ENCODE measurements at regions of chr2 and their contacts with region 1.

Region 1: DNA sequence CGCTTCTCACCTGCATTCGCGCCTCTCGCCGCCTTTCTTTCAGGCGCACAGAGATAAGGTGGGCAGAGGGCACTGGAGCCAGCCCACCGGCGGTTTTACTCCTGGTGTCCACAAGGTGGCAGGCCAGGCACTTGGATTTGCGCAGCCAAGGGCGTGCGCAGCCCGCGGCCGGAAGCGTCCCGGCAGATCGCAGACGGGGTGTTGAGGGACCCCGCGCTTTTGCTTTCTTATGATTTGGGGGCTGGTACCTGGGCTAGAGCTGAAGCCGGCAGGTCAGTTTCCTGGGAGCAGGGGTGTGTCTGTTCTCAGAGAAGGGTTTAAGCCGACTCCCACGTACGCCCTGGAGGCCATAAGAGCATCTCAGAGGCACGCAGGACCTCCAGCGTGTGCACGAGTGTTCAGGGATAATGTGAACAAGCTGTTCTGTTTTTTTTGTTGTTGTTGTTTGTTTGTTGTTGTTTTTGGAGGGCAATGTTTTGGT is 305.6 kb upstream of the CXCR4 start:
- DNase-seq: peak; percentile 45
- H3K4me3 ChIP-seq: peak overlapping the region; percentile 34 to 46 (median 41)
- H3K27ac ChIP-seq: no peak overlapping the region
- H3K4me1 ChIP-seq: no peaks in the 10 kb centered on the region
- H3K27me3 ChIP-seq: peaks cover 3% of the 10 kb centered on the region
- CTCF ChIP-seq: peak; percentile 74 to 87

Region 2: DNA sequence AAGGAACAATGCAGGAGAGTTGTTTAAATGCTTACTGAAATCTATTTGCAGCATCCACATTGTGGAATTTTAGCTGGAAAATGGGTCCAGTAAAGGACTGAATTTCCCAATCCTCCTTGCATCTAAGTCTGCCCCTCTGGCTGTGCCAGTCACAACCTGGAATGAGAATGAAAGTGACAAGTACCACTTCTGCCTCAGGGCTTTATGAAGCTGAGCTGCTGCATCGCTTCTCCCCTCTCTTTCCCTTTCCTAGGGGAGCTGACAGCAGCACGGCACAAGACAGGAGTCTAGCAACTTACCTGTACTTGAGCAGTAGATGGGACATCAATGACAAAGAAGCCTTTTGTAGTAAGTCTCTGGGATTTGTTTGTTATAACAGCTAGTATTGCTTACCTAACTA is 314.5 kb after region 1 on chr2:
- CTCF ChIA-PET with region 1: no interaction called
- dilution Hi-C with region 1: no loop called
- in situ Hi-C with region 1: no loop called
- intact Hi-C with region 1: loop called (anchors 1 kb)
- DNase-seq: no peak
- H3K4me3 ChIP-seq: no peak overlapping the region
- H3K27ac ChIP-seq: no peak overlapping the region
- H3K4me1 ChIP-seq: no peaks in the 10 kb centered on the region
- H3K27me3 ChIP-seq: no peaks in the 10 kb centered on the region
- CTCF ChIP-seq: no peak

Region 3: DNA sequence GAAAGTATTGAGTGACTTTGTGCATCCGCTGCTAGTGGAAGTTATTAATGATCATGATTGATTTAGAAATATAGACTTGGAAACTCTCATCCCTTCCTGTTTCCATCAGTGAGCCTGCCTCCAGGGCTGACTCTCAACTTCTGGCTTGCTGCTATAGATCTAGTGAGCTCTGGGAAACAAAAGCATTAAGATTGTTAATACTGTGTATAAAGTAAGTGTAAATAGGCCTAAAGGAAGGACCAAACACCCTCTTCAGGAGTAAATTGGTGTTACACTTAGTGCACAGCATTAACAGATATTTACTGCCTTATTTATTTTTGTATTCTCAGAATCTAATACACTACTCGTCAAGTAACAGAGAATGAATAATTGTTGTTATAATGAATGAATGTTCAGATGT is 627.4 kb after region 1 on chr2:
- CTCF ChIA-PET with region 1: no interaction called
- dilution Hi-C with region 1: no loop called
- in situ Hi-C with region 1: no loop called
- intact Hi-C with region 1: loop called (anchors 2 kb)
- DNase-seq: no peak
- H3K4me3 ChIP-seq: no peak overlapping the region
- H3K27ac ChIP-seq: no peak overlapping the region
- H3K4me1 ChIP-seq: no peaks in the 10 kb centered on the region
- H3K27me3 ChIP-seq: no peaks in the 10 kb centered on the region
- CTCF ChIP-seq: peak; percentile 37 to 53

Region 4: DNA sequence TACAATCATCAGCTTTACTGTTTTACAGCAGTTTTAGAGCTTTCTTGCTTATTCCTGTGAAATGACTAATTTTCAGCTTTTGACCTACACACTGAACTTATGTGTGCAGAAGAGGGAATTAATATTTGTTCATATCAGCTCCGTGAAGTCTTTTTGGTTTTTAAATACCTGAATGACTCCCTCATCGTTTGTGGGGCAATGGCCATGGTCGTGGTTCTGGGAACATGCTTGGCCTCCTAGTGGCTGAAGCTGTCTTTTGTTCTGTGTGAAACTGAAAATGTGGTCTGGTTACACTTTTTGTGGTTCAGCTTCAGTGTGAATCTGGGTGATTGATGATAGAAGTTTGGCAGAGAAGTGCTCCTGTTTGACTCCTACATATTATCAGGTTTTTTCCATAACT is 749.9 kb after region 1 on chr2:
- CTCF ChIA-PET with region 1: no interaction called
- dilution Hi-C with region 1: no loop called
- in situ Hi-C with region 1: no loop called
- intact Hi-C with region 1: loop called (anchors 10 kb)
- DNase-seq: peak; percentile 81
- H3K4me3 ChIP-seq: no peak overlapping the region
- H3K27ac ChIP-seq: no peak overlapping the region
- H3K4me1 ChIP-seq: peaks cover 18% of the 10 kb centered on the region
- H3K27me3 ChIP-seq: no peaks in the 10 kb centered on the region
- CTCF ChIP-seq: peak; percentile 65 to 67

Measured in mammary epithelial cell (primary cell).